ENCODE measurements at regions of chr6 and their contacts with region 1.

Region 1: GRCh38 chr6:158313989-158314388 is 1.7 kb downstream of the TULP4 start:
- DNase-seq: no peak
- H3K4me3 ChIP-seq: no peak overlapping the region
- H3K27ac ChIP-seq: no peak overlapping the region
- H3K4me1 ChIP-seq: no peaks in the 10 kb centered on the region
- H3K27me3 ChIP-seq: no peaks in the 10 kb centered on the region
- CTCF ChIP-seq: no peak
- POLR2A ChIP-seq: no peak

Region 2: DNA sequence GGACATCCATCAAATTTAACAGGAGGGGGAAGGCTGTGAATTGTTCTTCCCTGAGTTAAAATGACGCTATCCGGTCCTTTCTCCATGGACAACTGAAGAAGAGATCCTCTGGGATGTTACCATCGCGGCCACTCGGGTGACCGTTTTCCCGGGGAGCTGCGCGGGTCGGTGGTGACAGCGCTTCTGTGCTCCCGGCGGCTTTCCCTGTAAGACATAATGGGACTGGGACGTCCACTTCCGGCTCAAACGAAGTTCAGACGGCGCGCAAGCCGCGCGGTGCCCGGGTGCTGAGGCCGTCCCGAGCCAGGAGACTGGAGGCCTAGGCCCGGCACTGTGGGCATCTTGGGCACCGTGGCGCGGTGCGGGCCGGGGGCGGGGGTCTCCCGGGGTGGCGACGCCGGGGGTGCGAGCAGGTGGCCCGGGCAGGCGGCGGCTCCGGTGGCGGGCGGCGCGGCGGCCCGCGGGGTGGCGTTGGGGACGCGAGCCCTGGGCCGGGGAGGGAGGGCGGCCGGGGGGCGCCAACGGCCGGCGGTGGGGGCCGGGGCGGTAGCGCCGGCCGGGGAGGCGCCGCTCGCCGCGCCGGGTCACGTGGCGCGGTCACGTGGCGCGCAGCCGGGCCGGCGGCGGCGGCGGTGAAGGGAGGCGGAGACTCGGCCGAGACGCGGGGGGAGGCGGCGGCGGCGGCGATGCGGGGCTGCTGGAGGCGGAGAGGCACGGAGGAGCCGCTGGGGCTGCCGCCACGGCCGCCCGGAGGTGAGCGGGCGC is 82.3 kb before region 1 on chr6:
- intact Hi-C with region 1: no loop called
- DNase-seq: peak; percentile 41 to 71
- H3K4me3 ChIP-seq: peak overlapping the region; percentile 70 to 88 (median 84)
- H3K27ac ChIP-seq: peak overlapping the region; percentile 88 to 99
- H3K4me1 ChIP-seq: peaks cover 0 to 4% of the 10 kb centered on the region in 2 donors
- H3K27me3 ChIP-seq: no peaks in the 10 kb centered on the region
- CTCF ChIP-seq: no peak
- POLR2A ChIP-seq: no peak

Region 3: GRCh38 chr6:158286413-158286812 is 27.6 kb before region 1 on chr6:
- intact Hi-C with region 1: loop called (anchors 2 kb)
- DNase-seq: no peak
- H3K4me3 ChIP-seq: no peak overlapping the region
- H3K27ac ChIP-seq: no peak overlapping the region
- H3K4me1 ChIP-seq: peaks cover 2 to 10% of the 10 kb centered on the region in 2 donors
- H3K27me3 ChIP-seq: no peaks in the 10 kb centered on the region
- CTCF ChIP-seq: no peak
- POLR2A ChIP-seq: no peak